IMR-90 (cell line): ENCODE measurements at regions of chr3 and their contacts with region 1.

Region 1: GRCh38 chr3:16309558-16309957 is 44.5 kb downstream of the OXNAD1 start:
- DNase-seq: peak; percentile 68
- ATAC-seq: peak; percentile 49; the same call in 1 of the 2 replicates
- H3K4me3 ChIP-seq: no peak overlapping the region
- H3K27ac ChIP-seq: no peak overlapping the region
- H3K4me1 ChIP-seq: no peaks in the 10 kb centered on the region; the same call in 1 of the 2 replicates
- H3K27me3 ChIP-seq: no peaks in the 10 kb centered on the region
- CTCF ChIP-seq: no peak
- POLR2A ChIP-seq: no peak
- RAD21 ChIP-seq: no peak

Region 2: DNA sequence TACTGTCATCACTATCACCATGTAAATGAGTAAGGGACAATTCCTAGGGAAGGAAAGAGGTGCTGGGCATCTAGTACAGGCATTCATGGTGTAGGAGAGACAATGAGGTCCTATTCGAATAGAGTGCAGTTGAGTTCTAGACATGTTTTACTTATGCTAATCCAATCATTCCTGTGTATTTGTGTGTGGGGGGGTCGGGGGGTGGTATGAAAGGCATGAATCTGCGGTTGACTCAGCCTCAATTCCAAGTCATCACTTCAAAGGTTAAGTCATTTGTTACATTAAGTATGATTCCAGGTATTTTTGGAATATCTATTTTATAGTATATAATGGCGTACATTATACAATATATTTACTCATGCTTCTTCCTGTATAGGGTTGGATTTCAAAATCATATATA is 298.2 kb before region 1 on chr3:
- CTCF ChIA-PET with region 1: no interaction called
- POLR2A ChIA-PET with region 1: no interaction called
- dilution Hi-C with region 1: no loop called
- in situ Hi-C with region 1: no loop called
- intact Hi-C with region 1: no loop called
- DNase-seq: peak; percentile 58
- ATAC-seq: no peak
- H3K4me3 ChIP-seq: no peak overlapping the region
- H3K27ac ChIP-seq: peak overlapping the region; percentile 30; the same call in 1 of the 2 replicates
- H3K4me1 ChIP-seq: peaks cover 9% of the 10 kb centered on the region
- H3K27me3 ChIP-seq: no peaks in the 10 kb centered on the region
- CTCF ChIP-seq: no peak
- POLR2A ChIP-seq: no peak
- RAD21 ChIP-seq: no peak

Region 3: GRCh38 chr3:16516695-16517481 is 207.3 kb after region 1 on chr3:
- CTCF ChIA-PET with region 1: no interaction called
- POLR2A ChIA-PET with region 1: interaction called, 3 read pairs
- dilution Hi-C with region 1: no loop called
- in situ Hi-C with region 1: loop called (anchors 5 kb)
- intact Hi-C with region 1: no loop called
- DNase-seq: peak; percentile 74
- ATAC-seq: peak; percentile 32
- H3K4me3 ChIP-seq: no peak overlapping the region
- H3K27ac ChIP-seq: peak overlapping the region; percentile 11; the same call in 1 of the 2 replicates
- H3K4me1 ChIP-seq: peaks cover 7% of the 10 kb centered on the region
- H3K27me3 ChIP-seq: peaks cover 3% of the 10 kb centered on the region; the same call in 1 of the 2 replicates
- CTCF ChIP-seq: peak; percentile 76
- POLR2A ChIP-seq: no peak
- RAD21 ChIP-seq: peak; percentile 82